Gastrocnemius medialis (tissue), 4 donors: ENCODE measurements at regions of chr2 and their contacts with region 1.

Region 1: DNA sequence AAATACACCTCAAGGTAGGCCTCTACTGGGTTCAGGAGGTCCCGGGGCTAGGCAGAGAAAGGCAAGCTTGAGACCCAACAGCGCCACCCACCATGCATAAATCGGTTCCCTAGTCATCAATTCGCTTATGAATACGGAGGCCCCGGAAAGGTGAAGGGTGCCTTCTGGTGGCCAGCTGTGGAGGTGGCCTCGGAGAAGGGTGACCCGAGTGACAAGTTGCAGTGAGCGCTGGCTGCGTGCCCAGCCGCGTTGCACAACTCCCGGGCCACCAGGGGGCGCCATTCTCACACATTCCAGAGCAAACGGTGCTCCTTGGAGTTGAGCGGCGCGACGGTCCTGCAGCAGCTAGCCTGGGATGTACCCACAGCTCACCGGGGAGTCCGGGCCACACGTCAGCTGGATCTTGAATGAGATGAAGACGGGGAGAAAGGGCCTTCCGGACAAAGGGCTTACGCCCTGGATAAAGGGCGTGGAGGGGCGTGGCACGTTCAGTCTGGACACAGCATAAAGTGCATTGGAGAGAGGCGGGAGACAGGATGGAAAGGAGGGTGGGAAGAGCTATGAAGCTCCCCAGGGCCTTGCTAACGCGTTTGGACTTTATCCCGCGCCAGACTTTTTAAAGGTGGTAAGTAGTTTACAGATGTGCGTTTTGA is 20.4 kb downstream of the TMSB10 start:
- DNase-seq: peak; percentile 79 to 93
- ATAC-seq: peak; percentile 76 to 86
- H3K4me3 ChIP-seq: peak overlapping the region; percentile 34 to 60 (median 38)
- H3K27ac ChIP-seq: peak overlapping the region in 3 of 4 donors; percentile 53 to 65 (median 54)
- H3K4me1 ChIP-seq: no peaks in the 10 kb centered on the region
- H3K27me3 ChIP-seq: no peaks in the 10 kb centered on the region
- CTCF ChIP-seq: peak; percentile 90 to 98 (median 96)
- POLR2A ChIP-seq: no peak

Region 2: GRCh38 chr2:84495539-84496146 is 430.2 kb before region 1 on chr2:
- in situ Hi-C with region 1: loop called in 1 of 4 experiments (anchors 5 kb)
- intact Hi-C with region 1: no loop called
- DNase-seq: no peak
- ATAC-seq: peak in 1 of 2 donors; percentile 56
- H3K4me3 ChIP-seq: no peak overlapping the region
- H3K27ac ChIP-seq: no peak overlapping the region
- H3K4me1 ChIP-seq: no peaks in the 10 kb centered on the region
- H3K27me3 ChIP-seq: no peaks in the 10 kb centered on the region
- CTCF ChIP-seq: peak; percentile 40 to 61 (median 55)
- POLR2A ChIP-seq: no peak

Region 3: GRCh38 chr2:84881581-84882414 is 44.1 kb before region 1 on chr2:
- in situ Hi-C with region 1: no loop called
- intact Hi-C with region 1: loop called (anchors 5 kb)
- DNase-seq: peak; percentile 49 to 55
- ATAC-seq: peak; percentile 70 to 76
- H3K4me3 ChIP-seq: peak overlapping the region; percentile 44 to 57 (median 50)
- H3K27ac ChIP-seq: no peak overlapping the region
- H3K4me1 ChIP-seq: peaks cover 20 to 21% of the 10 kb centered on the region in 2 donors
- H3K27me3 ChIP-seq: peaks cover 21 to 27% (median 26%) of the 10 kb centered on the region in 3 donors
- CTCF ChIP-seq: peak; percentile 31 to 75 (median 60)
- POLR2A ChIP-seq: no peak

Region 4: DNA sequence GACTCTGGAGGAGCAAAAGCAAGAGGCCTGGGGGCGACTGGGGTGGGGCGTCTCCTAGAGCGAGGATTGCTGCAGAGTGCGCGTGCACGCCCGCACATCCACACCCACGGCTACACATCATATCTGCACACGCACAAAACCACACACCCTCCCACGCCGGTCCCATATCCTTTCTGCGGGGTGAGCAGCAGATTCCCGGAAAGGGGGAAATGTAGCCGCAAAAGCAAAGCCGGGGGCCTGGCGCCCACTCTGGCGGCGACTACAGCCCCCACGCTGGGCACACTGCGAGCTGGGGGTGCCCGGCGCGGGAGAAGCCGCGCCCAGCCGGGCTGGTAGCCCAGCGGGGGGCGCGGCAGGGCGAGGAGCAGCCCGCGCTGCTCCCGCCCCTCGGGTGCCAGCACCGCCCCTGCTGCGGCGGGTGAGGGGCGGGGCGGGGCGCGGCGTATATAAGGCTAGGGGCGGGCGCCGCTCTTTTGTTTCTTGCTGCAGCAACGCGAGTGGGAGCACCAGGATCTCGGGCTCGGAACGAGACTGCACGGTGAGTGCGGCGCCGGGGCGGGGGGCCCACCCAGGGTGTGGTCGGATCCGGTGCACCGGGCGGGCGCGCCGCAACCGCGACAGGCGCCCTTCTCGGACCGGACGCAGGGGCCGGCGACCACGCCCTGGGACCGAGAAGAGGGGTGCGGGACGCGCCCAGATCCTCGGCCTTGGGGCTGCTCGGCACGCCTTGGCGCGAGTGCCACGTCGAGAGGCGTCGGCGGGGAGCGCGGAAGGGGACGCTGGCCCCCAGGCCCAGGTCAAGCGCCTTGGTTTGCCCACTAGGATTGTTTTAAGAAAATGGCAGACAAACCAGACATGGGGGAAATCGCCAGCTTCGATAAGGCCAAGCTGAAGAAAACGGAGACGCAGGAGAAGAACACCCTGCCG is 20.4 kb before region 1 on chr2 and contains the start of gene TMSB10:
- in situ Hi-C with region 1: no loop called
- intact Hi-C with region 1: loop called (anchors 2 kb)
- DNase-seq: peak; percentile 56 to 64
- ATAC-seq: peak; percentile 57 to 70
- H3K4me3 ChIP-seq: peak within 1 kb of the TSS; percentile 78 to 96 (median 80)
- H3K27ac ChIP-seq: peak within 1 kb of the TSS; percentile 78 to 87 (median 82)
- H3K4me1 ChIP-seq: peaks cover 5 to 21% of the 10 kb centered on the region in 2 donors
- H3K27me3 ChIP-seq: peaks cover 0 to 8% (median 0%) of the 10 kb centered on the region in 3 donors
- CTCF ChIP-seq: peak in 1 of 5 experiments; percentile 7
- POLR2A ChIP-seq: peak; percentile 74 to 91
- total RNA-seq, gene TMSB10: 329 to 954 (median 486) TPM

Region 5: DNA sequence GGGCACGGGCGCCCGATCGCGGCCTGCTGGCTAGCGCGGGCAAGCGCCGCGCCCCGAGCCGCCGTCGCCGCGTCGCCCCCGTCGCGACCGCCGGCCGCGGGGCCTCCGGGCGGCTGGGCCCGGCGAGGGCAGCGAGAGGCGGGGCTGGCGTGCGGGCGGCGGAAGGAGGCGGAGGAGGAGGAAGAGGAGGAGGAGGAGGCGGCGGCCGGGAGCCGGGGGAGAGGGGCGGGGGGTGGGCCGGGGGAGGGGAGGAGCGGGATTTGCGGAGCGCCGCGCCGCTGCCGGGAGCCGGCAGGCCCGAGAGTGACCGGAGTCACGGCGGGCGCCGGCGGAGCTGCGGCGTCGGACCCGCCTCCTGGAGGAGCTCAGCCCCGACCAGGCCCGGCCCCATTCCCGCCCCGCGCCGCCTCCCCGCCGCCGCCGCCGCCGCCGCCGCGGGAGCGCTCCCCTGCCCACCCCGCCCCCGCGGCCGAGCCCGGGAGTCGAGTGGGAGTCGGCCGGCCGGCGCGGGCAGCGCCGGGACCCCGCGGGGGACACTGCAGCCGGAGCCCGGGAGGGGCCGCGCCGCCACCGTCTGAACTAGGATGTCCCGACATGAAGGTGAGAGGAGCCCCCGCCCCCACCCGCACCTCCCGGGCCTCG is 45.1 kb after region 1 on chr2 and contains the start of gene KCMF1:
- in situ Hi-C with region 1: no loop called
- intact Hi-C with region 1: no loop called
- DNase-seq: peak; percentile 82 to 83
- ATAC-seq: peak; percentile 70 to 74
- H3K4me3 ChIP-seq: peak within 1 kb of the TSS; percentile 81 to 96 (median 92)
- H3K27ac ChIP-seq: peak within 1 kb of the TSS; percentile 92 to 99 (median 97)
- H3K4me1 ChIP-seq: peaks cover 52 to 53% of the 10 kb centered on the region in 2 donors
- H3K27me3 ChIP-seq: no peaks in the 10 kb centered on the region
- CTCF ChIP-seq: no peak
- POLR2A ChIP-seq: peak in 1 of 2 donors; percentile 4
- total RNA-seq, gene KCMF1: 158 to 178 (median 165) TPM

Region 6: DNA sequence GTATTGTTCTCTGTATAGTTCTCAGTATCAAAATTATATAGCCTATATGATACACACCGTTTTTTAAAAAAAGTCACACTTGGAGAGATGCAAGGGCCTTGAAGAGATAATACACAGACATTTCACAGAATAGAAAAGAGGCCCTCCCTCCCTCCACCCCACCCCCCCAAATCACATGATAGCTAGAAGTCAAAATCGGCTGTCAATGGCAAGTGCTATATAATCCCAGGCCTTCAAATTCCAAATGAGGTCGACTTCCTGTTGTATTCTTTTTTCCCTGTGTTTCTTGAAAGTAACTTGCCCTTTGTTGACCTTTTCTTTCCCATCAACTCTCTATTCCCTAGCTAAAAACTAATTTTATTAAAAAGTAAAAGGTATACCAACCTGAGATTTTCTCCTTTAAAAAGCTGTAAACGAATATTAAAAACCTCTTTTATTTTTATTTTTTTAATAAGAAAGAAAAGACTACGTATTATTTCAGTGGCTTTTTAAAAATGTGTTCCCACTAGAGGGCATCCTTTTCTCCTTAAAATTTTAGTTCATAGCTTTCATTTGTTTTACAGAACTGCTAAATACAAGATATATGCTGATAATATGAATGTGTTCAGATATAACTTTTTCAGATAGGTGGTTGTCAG is 91.7 kb after region 1 on chr2:
- in situ Hi-C with region 1: no loop called
- intact Hi-C with region 1: loop called (anchors 2 kb)
- DNase-seq: no peak
- ATAC-seq: no peak
- H3K4me3 ChIP-seq: no peak overlapping the region
- H3K27ac ChIP-seq: peak overlapping the region in 2 of 4 donors; percentile 12 to 41
- H3K4me1 ChIP-seq: peaks cover 37 to 45% of the 10 kb centered on the region in 2 donors
- H3K27me3 ChIP-seq: no peaks in the 10 kb centered on the region
- CTCF ChIP-seq: peak in 3 of 5 experiments; percentile 17 to 41 (median 21)
- POLR2A ChIP-seq: no peak

Region 7: GRCh38 chr2:85302121-85302520 is 376.3 kb after region 1 on chr2:
- in situ Hi-C with region 1: no loop called
- intact Hi-C with region 1: loop called (anchors 5 kb)
- DNase-seq: no peak
- ATAC-seq: no peak
- H3K4me3 ChIP-seq: no peak overlapping the region
- H3K27ac ChIP-seq: no peak overlapping the region
- H3K4me1 ChIP-seq: peaks cover 4 to 6% of the 10 kb centered on the region in 2 donors
- H3K27me3 ChIP-seq: no peaks in the 10 kb centered on the region
- CTCF ChIP-seq: no peak
- POLR2A ChIP-seq: no peak